ENCODE measurements at regions of chr7 and their contacts with region 1.

Region 1: DNA sequence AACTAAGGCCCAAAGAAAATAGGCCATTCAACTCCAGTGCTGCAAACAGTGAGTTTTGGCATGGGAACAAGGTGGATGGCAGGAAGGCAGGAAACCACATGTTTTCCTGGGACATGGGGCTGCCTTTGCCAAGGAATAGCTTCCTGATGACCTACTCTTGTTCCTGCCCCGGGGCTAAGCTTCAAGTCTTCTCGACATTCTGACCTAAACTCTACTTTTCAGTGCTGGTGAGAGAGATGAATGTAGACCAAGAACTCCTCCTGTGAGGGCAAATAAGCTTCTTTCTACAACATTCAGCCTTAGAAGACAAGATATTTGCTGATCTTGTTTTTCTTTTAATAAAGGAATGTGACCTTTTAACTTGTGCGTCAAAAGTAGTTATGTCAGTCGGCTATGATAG is 199.0 kb downstream of the GPR37 start:
- DNase-seq: peak in 1 of 2 donors; percentile 35
- ATAC-seq: no peak
- H3K4me3 ChIP-seq: no peak overlapping the region
- H3K27ac ChIP-seq: no peak overlapping the region
- H3K4me1 ChIP-seq: peaks cover 0 to 2% of the 10 kb centered on the region in 2 donors
- H3K27me3 ChIP-seq: no peaks in the 10 kb centered on the region

Region 2: GRCh38 chr7:124536156-124536762 is 30.3 kb before region 1 on chr7:
- intact Hi-C with region 1: loop called in 1 of 2 experiments (anchors 1 kb)
- DNase-seq: no peak
- ATAC-seq: no peak
- H3K4me3 ChIP-seq: no peak overlapping the region
- H3K27ac ChIP-seq: no peak overlapping the region
- H3K4me1 ChIP-seq: no peaks in the 10 kb centered on the region
- H3K27me3 ChIP-seq: no peaks in the 10 kb centered on the region

Region 3: DNA sequence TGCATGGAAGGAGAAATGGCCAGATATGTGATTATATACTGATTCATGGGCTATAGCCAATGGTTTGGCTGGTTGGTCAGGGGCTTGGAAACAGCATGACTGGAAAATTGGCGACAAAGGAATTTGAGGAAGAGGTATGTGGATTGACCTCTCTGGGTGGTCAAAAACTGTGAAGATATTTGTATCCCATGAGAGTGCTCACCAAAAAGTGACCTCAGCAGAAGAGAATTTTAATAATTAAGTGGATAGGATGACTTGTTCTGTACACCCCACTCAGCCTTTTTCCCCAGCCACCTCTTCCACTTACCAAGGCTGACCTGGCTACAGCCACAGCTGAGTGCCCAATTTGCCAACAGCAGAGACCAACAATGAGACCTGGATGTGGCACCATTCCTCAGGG is 52.3 kb after region 1 on chr7:
- intact Hi-C with region 1: no loop called
- DNase-seq: no peak
- ATAC-seq: no peak
- H3K4me3 ChIP-seq: no peak overlapping the region
- H3K27ac ChIP-seq: no peak overlapping the region
- H3K4me1 ChIP-seq: no peaks in the 10 kb centered on the region
- H3K27me3 ChIP-seq: no peaks in the 10 kb centered on the region